ENCODE measurements at regions of chr13 and their contacts with region 1.

Region 1: DNA sequence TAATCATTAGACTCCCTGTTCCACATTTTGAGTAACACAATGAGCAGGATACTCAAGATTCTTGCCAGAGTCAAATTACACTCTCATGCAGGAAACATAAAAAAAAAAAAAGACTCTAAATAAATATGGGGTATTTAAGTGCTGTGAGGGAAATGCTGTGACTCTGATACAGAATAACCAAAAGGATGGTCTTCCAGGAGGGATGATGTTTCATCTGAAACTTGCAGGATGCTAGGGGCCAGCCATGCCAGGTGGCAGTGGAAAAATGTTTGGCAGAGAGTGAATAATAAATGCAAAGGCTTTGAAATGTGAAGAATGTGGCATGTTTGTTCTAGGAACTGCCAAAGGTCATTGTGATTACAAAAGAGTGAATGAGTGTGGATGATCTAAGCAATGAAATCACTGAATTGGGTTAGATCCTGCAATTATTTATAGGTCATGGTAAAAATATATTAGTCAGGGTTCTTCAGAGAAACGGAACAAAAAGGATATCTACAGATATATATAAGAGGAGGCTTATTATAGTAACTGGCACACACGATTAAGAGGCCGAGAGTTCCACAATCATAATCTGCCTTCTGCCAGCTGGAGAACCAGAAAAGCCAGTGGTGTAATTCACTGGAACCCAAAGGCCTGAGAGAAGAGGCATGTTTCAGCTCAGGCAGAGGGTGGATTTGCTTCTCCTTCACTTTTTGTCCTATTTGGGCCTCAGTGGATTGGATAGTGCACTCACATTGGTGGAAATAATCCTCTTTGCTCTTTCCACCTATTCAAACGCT is 1832.8 kb upstream of the MIR17HG start:
- DNase-seq: peak; percentile 62 to 84
- H3K4me3 ChIP-seq: no peak overlapping the region
- H3K27ac ChIP-seq: peak overlapping the region; percentile 51
- H3K4me1 ChIP-seq: peaks cover 29% of the 10 kb centered on the region
- H3K27me3 ChIP-seq: no peaks in the 10 kb centered on the region
- CTCF ChIP-seq: no peak

Region 2: DNA sequence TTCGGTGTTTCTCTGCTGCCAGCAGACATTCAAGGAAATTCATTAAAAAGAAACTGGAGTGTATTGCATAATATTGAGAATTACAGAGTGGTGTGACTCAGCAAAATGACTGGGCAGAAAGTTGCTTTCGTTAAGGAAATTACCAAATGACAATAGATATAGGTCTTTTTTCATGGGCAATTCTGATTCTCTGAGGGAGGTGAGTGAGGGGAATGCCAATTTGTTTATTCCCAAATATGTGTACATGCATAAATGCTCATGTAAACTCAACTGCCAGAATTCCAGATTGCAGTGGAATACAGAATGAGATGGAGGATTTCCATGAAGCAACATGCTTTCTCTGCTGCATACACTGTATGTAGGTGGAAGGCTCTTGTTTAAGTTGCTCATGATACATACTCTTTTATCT is 113.5 kb before region 1 on chr13:
- CTCF ChIA-PET with region 1: no interaction called
- POLR2A ChIA-PET with region 1: no interaction called
- intact Hi-C with region 1: loop called (anchors 10 kb)
- DNase-seq: peak; percentile 3 to 58
- H3K4me3 ChIP-seq: peak overlapping the region; percentile 30; the same call in 1 of the 2 replicates
- H3K27ac ChIP-seq: peak overlapping the region; percentile 78
- H3K4me1 ChIP-seq: peaks cover 11% of the 10 kb centered on the region
- H3K27me3 ChIP-seq: no peaks in the 10 kb centered on the region
- CTCF ChIP-seq: no peak

Region 3: DNA sequence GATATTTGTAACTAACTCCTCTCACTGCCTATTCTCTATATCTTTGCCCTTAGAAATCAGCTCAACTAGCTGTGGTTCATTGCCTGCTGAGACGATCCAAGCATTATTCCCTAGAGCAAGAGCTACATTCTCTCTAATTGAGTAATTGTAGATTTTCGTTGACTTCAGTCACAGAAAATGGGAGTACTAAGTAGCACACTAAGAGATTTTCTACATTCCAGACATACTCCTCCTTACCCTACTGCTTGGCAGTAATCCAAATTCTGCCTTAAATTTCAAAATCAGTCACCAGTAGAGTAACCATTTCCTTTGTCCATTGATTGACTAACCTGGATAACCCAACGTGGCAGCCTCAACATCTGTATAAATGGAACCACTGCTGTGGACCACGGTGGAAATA is 56.7 kb before region 1 on chr13:
- CTCF ChIA-PET with region 1: no interaction called
- POLR2A ChIA-PET with region 1: no interaction called
- intact Hi-C with region 1: loop called (anchors 2 kb)
- DNase-seq: peak; percentile 7 to 60
- H3K4me3 ChIP-seq: no peak overlapping the region
- H3K27ac ChIP-seq: no peak overlapping the region
- H3K4me1 ChIP-seq: no peaks in the 10 kb centered on the region; the same call in 1 of the 2 replicates
- H3K27me3 ChIP-seq: no peaks in the 10 kb centered on the region
- CTCF ChIP-seq: no peak

Region 4: DNA sequence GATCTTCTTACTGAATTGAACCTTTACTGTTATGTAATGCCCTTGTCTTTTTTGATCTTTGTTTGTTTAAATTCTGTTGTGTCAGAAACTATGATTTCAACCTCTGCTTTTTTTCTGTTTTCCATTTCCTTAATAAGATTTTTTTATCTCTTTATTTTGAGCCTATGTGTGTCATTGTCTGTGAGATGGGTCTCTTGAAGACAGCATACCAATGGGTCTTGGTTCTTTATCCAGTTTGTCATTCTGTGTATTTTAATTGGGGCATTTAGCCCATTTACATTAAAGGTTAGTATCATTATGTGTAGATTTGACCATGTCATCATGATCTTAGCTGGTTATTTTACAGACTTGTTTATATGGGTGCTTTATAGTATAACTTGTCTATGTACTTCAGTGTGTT is 40.3 kb before region 1 on chr13:
- CTCF ChIA-PET with region 1: no interaction called
- POLR2A ChIA-PET with region 1: no interaction called
- intact Hi-C with region 1: no loop called
- DNase-seq: no peak
- H3K4me3 ChIP-seq: no peak overlapping the region
- H3K27ac ChIP-seq: no peak overlapping the region
- H3K4me1 ChIP-seq: no peaks in the 10 kb centered on the region
- H3K27me3 ChIP-seq: no peaks in the 10 kb centered on the region
- CTCF ChIP-seq: no peak

Region 5: GRCh38 chr13:90445179-90445578 is 930.5 kb after region 1 on chr13:
- CTCF ChIA-PET with region 1: no interaction called
- POLR2A ChIA-PET with region 1: no interaction called
- intact Hi-C with region 1: loop called (anchors 10 kb)
- DNase-seq: peak; percentile 67 to 74
- H3K4me3 ChIP-seq: no peak overlapping the region
- H3K27ac ChIP-seq: peak overlapping the region; percentile 24
- H3K4me1 ChIP-seq: peaks cover 32% of the 10 kb centered on the region
- H3K27me3 ChIP-seq: no peaks in the 10 kb centered on the region
- CTCF ChIP-seq: no peak